ENCODE measurements at regions of chr10 and their contacts with region 1.

Region 1: DNA sequence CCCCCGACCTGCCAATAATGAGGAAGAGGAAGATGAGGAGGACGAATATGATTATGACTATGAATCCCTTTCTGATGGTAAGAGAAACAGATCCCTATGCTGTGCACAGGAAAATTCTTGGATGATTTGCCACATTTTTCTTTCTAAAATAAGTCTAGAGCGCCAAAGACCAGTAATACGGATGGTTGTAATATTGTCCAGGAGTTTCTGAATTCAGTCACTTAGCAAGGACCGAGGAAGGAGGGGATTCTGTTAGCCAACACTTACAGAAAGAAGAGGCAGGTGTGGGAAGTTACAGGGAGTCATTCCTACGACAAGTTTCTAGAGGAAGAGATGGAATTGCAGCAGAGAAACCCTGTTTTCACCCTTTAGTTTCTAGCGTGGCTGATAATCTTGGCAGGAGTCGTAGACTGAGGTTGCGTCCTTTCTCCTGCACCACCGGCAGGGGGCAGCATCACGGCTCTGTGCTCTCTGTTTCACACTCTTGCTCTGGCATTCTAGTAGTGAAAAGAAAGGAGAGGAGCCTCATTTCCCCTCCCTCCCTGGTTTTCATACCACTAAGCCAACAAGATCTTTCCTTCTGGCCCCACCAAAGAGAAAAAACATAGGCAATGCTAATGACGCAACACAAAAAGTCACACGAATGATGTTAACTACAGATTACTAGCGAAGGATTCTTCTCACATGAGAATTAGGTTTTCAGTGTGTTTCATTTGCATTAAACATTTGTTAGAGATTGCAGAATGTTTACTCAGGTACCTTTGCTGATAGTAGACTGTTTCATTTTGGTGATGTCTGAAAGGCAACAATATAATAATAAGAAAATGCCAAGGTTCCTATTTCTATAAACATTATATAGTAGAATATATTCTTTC is 82.7 kb downstream of the NOC3L start:
- DNase-seq: peak; percentile 44
- H3K4me3 Mint-ChIP-seq: no peak overlapping the region
- H3K27ac Mint-ChIP-seq: no peak overlapping the region
- H3K4me1 Mint-ChIP-seq: peaks cover 2% of the 10 kb centered on the region
- H3K27me3 Mint-ChIP-seq: peaks cover 40% of the 10 kb centered on the region

Region 2: DNA sequence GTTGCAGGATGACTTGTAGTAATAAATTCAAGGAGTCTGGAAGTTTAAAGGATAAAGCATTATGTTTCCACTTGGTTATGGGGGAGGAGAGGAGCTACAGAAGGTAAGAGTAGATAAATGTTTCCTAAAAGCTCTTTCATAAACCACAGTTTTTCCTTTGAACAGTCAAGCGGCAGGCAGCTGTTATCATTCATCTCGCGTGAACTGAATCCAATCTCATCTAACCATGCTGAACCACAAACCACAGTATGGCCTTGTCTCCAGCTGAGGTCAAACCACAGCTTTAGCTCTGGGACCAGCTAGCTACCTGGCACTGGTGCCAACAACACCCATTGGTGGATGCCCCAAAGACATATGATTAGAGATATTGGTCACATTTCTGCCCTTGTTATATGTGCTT is 19.3 kb after region 1 on chr10:
- intact Hi-C with region 1: loop called (anchors 2 kb)
- DNase-seq: peak; percentile 57
- H3K4me3 Mint-ChIP-seq: no peak overlapping the region
- H3K27ac Mint-ChIP-seq: no peak overlapping the region
- H3K4me1 Mint-ChIP-seq: peaks cover 23% of the 10 kb centered on the region
- H3K27me3 Mint-ChIP-seq: peaks cover 62% of the 10 kb centered on the region

Region 3: DNA sequence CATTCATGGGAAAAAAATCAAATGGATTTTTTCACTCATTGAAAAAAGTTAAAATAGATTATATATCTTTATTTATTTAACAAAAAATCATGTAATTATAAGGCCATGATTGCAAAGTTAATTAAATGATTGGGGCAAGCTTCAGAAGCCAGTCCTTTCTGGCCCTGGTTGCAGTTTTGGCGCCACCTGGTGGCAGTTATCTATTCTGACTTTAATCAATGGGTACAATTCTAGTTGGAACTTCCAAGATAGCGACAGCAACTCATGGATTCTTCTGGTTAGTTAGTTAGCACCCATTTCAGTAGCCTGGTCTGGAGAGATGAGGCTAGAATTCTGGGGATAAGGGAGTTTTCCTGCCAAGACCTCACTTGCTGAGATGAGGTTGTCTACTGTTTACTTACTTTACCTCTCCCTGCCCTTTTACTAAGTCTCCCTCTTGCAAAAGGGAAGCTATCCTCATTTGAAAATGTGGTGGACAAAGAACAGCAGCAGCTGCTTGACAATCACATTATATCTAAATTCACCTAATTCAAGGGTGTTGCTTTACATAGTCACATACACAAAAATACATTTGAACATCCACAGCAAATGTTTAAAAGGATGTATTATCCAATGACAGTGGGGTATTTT is 40.3 kb after region 1 on chr10:
- intact Hi-C with region 1: loop called (anchors 1 kb)
- DNase-seq: peak; percentile 34
- H3K4me3 Mint-ChIP-seq: no peak overlapping the region
- H3K27ac Mint-ChIP-seq: no peak overlapping the region
- H3K4me1 Mint-ChIP-seq: peaks cover 4% of the 10 kb centered on the region
- H3K27me3 Mint-ChIP-seq: no peaks in the 10 kb centered on the region

Region 4: DNA sequence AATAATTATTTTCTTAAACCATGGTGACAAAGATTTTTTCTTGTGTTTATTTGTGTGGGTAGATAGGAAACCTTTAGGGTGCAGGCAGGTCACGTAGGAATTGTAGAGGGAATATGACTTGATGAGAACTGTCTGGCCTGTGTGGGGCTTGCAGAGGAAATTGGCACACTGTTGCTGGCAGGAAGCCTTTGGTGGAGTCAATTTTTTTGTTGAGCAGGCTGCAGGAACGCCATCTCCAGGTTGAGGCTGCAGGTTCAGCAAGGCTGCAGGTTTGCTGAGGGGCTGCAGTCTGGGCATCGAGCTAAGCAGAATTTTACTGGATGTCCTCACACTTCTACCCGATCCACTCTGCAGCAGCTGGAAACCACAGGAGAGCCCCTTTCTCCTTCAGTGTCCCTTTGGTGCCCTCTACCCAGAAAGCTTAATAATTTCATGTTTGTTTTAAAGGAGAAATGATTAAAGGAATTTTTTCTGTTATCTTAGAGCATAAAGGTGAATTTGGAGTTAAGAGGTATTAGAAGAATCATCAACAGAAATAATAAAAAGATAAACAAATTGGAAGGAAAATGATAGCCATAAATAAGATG is 159.3 kb after region 1 on chr10:
- intact Hi-C with region 1: loop called (anchors 1 kb)
- DNase-seq: no peak
- H3K4me3 Mint-ChIP-seq: no peak overlapping the region
- H3K27ac Mint-ChIP-seq: no peak overlapping the region
- H3K4me1 Mint-ChIP-seq: no peaks in the 10 kb centered on the region
- H3K27me3 Mint-ChIP-seq: peaks cover 3% of the 10 kb centered on the region